ENCODE measurements at regions of chr12 and their contacts with region 1.

Region 1: GRCh38 chr12:132523576-132524331 is 33.8 kb downstream of the FBRSL1 start:
- DNase-seq: no peak
- H3K4me3 ChIP-seq: no peak overlapping the region
- H3K27me3 ChIP-seq: no peaks in the 10 kb centered on the region
- CTCF ChIP-seq: peak; percentile 88

Region 2: DNA sequence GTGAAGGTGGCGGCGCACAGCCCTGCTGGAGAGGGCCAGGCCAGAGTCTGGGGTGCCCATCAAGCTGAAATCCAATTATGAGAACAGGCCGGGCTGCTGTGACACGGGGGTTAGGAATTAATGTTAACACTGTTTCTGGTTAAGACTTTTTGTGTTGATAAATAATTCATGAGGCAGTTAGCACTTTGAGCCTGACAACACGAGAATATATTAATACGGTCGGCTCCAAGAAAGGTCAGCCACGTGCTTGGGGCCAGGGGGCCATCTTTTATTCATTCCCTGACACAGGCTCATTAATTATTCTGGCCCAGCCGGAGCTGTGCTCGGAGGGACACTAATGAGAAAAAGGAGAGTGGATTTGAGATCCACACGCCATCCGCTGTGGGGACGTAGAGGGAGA is 11.3 kb after region 1 on chr12:
- CTCF ChIA-PET with region 1: interaction called, 11 read pairs
- POLR2A ChIA-PET with region 1: no interaction called
- DNase-seq: no peak
- H3K4me3 ChIP-seq: no peak overlapping the region
- H3K27me3 ChIP-seq: no peaks in the 10 kb centered on the region
- CTCF ChIP-seq: no peak

Measured in BJ (cell line).